OCI-LY7 (cell line): ENCODE measurements at regions of chr5 and their contacts with region 1.

Region 1: DNA sequence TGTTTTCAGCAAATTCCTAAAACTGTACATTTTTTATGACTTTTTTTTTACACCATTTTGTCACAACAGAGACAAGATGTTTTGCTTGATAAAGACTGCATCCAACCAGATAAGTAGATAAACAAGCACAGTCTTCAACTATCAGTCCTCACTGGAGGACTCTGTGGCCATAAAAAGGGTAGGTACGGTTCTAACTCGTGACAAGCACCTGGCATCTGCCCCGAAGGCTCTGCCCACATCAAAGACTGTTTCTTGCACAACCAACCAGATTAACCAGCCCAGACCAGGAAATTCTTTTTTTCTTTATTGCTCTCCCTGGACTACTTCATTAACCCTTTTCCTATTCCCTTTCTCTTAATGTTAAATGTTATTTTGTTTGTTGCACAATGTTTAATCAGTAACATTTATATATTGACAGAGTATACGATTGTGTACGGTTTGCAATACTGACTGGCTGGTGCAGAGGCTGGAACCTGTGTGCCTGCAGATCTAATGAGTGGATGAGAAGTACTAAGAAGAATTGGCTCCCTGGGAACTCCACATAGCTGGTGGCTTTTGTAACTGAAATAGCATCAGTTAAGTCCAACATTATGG is 74.1 kb downstream of the SERINC5 start:
- DNase-seq: peak; percentile 95
- H3K4me3 ChIP-seq: peak overlapping the region; percentile 42
- H3K27ac ChIP-seq: peak overlapping the region; percentile 98
- H3K4me1 ChIP-seq: peaks cover 88% of the 10 kb centered on the region
- CTCF ChIP-seq: no peak

Region 2: GRCh38 chr5:79886925-79887655 is 294.6 kb before region 1 on chr5:
- CTCF ChIA-PET with region 1: no interaction called
- POLR2A ChIA-PET with region 1: no interaction called
- intact Hi-C with region 1: loop called (anchors 5 kb)
- DNase-seq: peak; percentile 93
- H3K4me3 ChIP-seq: peak overlapping the region; percentile 52
- H3K27ac ChIP-seq: peak overlapping the region; percentile 95
- H3K4me1 ChIP-seq: peaks cover 81% of the 10 kb centered on the region
- CTCF ChIP-seq: no peak

Region 3: DNA sequence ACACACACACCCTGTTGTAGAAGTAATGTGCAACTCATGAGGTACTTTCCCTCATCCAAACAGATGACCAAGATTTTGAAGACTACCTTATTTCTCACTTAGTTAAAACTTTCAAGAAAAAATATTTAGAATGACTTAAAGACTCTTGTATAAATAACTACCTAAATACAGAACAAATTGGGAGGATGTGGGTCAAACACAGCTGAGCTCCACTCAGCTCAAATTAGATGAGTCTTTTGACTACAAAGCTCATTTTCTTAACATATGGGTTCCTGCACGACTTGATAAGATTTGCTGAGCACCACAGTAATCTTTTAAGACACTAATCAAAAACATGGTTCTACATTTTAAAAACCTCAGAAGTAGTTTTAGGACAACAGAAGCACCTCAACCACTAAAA is 199.6 kb before region 1 on chr5:
- CTCF ChIA-PET with region 1: no interaction called
- POLR2A ChIA-PET with region 1: no interaction called
- intact Hi-C with region 1: loop called (anchors 5 kb)
- DNase-seq: peak; percentile 50
- H3K4me3 ChIP-seq: peak overlapping the region; percentile 13
- H3K27ac ChIP-seq: peak overlapping the region; percentile 97
- H3K4me1 ChIP-seq: peaks cover 83% of the 10 kb centered on the region
- CTCF ChIP-seq: no peak

Region 4: GRCh38 chr5:80034962-80035821 is 146.5 kb before region 1 on chr5 and contains the start of gene THBS4:
- CTCF ChIA-PET with region 1: no interaction called
- POLR2A ChIA-PET with region 1: no interaction called
- intact Hi-C with region 1: no loop called
- DNase-seq: no peak
- H3K4me3 ChIP-seq: no peak within 1 kb of the TSS
- H3K27ac ChIP-seq: no peak within 1 kb of the TSS
- H3K4me1 ChIP-seq: no peaks in the 10 kb centered on the region
- CTCF ChIP-seq: no peak
- total RNA-seq, gene THBS4: 1.8 and 4.5 TPM in 2 replicates

Region 5: DNA sequence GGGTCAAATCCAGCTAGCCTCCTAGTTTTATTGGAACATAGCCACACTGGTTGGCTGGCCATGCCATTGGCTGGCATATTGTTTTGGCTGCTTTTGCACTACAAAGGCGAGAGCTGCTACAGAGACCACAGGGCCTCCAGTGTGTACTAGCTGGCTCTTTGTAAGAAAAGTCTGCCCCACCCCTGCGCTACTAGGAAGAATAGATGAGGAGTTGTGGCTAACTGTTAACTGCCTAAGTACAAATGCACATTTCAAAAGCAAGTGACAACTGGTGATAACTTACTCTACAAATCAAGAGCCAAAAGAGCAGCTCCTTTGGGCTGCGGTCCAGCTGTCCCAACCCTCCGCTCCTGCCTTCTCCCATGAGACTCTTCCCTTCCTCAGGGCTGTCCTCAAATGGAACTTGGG is 10.3 kb after region 1 on chr5:
- CTCF ChIA-PET with region 1: interaction called, 4 read pairs
- POLR2A ChIA-PET with region 1: interaction called, 91 read pairs
- intact Hi-C with region 1: loop called (anchors 1 kb)
- DNase-seq: peak; percentile 54
- H3K4me3 ChIP-seq: peak overlapping the region; percentile 54
- H3K27ac ChIP-seq: peak overlapping the region; percentile 98
- H3K4me1 ChIP-seq: peaks cover 93% of the 10 kb centered on the region
- CTCF ChIP-seq: no peak

Region 6: DNA sequence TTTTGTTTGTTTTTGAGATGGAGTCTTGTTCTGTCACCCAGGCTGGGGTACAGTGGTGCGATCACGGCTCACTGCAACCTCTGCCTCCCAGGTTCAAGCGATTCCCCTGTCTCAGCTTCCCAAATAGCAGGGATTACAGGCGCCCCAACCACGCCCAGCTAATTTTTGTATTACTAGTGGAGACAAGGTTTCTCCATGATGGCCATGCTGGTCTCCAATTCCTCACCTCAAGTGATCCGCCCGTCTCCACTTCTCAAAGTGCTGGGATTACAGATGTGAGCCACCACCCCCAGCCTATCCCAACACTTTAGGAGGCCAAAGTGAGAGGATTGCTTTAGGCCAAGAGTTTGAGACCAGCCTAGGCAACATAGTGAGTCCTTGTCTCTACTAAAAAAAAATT is 157.4 kb after region 1 on chr5:
- CTCF ChIA-PET with region 1: no interaction called
- POLR2A ChIA-PET with region 1: no interaction called
- intact Hi-C with region 1: no loop called
- DNase-seq: no peak
- H3K4me3 ChIP-seq: no peak overlapping the region
- H3K27ac ChIP-seq: no peak overlapping the region
- H3K4me1 ChIP-seq: no peaks in the 10 kb centered on the region
- CTCF ChIP-seq: no peak

Region 7: DNA sequence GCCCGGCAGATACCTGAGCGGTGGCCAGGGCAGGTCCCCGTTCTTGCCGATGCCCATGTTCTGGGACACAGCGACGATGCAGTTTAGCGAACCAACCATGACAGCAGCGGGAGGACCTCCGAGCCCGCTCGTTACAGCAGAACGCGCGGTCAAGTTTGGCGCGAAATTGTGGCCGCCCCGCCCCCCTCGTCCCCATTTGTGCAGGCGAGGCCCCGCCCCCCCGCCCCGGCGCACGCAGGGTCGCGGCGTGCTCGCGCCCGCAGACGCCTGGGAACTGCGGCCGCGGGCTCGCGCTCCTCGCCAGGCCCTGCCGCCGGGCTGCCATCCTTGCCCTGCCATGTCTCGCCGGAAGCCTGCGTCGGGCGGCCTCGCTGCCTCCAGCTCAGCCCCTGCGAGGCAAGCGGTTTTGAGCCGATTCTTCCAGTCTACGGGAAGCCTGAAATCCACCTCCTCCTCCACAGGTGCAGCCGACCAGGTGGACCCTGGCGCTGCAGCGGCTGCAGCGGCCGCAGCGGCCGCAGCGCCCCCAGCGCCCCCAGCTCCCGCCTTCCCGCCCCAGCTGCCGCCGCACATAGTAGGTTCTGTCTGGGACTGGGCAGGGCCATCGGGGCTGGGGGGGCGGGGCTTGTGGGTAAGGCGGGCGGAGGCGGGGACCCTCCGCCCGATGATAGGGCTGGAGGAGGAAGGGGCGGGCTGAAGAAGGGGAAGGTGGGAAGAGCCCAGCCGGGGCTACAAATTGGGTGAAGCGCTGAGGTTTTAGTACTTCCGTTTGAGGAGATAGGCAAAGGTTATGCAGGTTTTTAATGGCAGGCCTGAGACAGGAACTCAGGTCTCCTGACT is 472.9 kb after region 1 on chr5 and contains the starts of genes DHFR and MSH3:
- CTCF ChIA-PET with region 1: no interaction called
- POLR2A ChIA-PET with region 1: interaction called, 3 read pairs
- intact Hi-C with region 1: loop called (anchors 10 kb)
- DNase-seq: peak; percentile 97
- H3K4me3 ChIP-seq: no peak within 1 kb of the TSS
- H3K27ac ChIP-seq: peak within 1 kb of the TSS; percentile 83
- H3K4me1 ChIP-seq: peaks cover 11% of the 10 kb centered on the region
- CTCF ChIP-seq: peak; percentile 52
- total RNA-seq, gene DHFR: 99.9 and 115 TPM in 2 replicates
- total RNA-seq, gene MSH3: 15.4 and 17.1 TPM in 2 replicates